ENCODE measurements at regions of chr5 and their contacts with region 1.

Region 1: GRCh38 chr5:56313004-56313531 is 79.9 kb upstream of the ANKRD55 start:
- DNase-seq: no peak

Region 2: GRCh38 chr5:56340196-56340980 is 27.3 kb after region 1 on chr5:
- intact Hi-C with region 1: loop called in 1 of 2 experiments (anchors 1 kb)
- DNase-seq: no peak